CD8-positive, alpha-beta T cell (primary cell): ENCODE measurements at regions of chrX and their contacts with region 1.

Region 1: GRCh38 chrX:65985922-65986588 is 53.8 kb downstream of the VSIG4 start:
- DNase-seq: peak in 8 of 9 experiments; percentile 13 to 84 (median 50)
- ATAC-seq: peak; percentile 97
- H3K4me3 ChIP-seq: no peak overlapping the region
- H3K4me3 Mint-ChIP-seq: no peak overlapping the region
- H3K27ac ChIP-seq: peak overlapping the region in 1 of 2 experiments; percentile 59
- H3K27ac Mint-ChIP-seq: peak overlapping the region; percentile 62
- H3K4me1 ChIP-seq: peaks cover 6% of the 10 kb centered on the region
- H3K4me1 Mint-ChIP-seq: peaks cover 14% of the 10 kb centered on the region
- H3K27me3 ChIP-seq: no peaks in the 10 kb centered on the region
- H3K27me3 Mint-ChIP-seq: no peaks in the 10 kb centered on the region
- CTCF ChIP-seq: peak; percentile 47

Region 2: GRCh38 chrX:65677954-65678469 is 308.0 kb before region 1 on chrX:
- CTCF ChIA-PET with region 1: interaction called, 5 read pairs
- POLR2A ChIA-PET with region 1: no interaction called
- intact Hi-C with region 1: loop called in 1 of 2 experiments (anchors 5 kb)
- DNase-seq: no peak
- ATAC-seq: no peak
- H3K4me3 ChIP-seq: no peak overlapping the region
- H3K4me3 Mint-ChIP-seq: peak overlapping the region; percentile 58
- H3K27ac ChIP-seq: peak overlapping the region in 1 of 2 experiments; percentile 54
- H3K27ac Mint-ChIP-seq: peak overlapping the region; percentile 77
- H3K4me1 ChIP-seq: peaks cover 85% of the 10 kb centered on the region
- H3K4me1 Mint-ChIP-seq: peaks cover 83% of the 10 kb centered on the region
- H3K27me3 ChIP-seq: no peaks in the 10 kb centered on the region
- H3K27me3 Mint-ChIP-seq: no peaks in the 10 kb centered on the region
- CTCF ChIP-seq: no peak

Region 3: GRCh38 chrX:65723706-65724105 is 262.3 kb before region 1 on chrX:
- CTCF ChIA-PET with region 1: no interaction called
- POLR2A ChIA-PET with region 1: no interaction called
- intact Hi-C with region 1: loop called in 1 of 2 experiments (anchors 10 kb)
- DNase-seq: peak in 5 of 9 experiments; percentile 13 to 81 (median 53)
- ATAC-seq: peak; percentile 68
- H3K4me3 ChIP-seq: no peak overlapping the region
- H3K4me3 Mint-ChIP-seq: peak overlapping the region; percentile 45
- H3K27ac ChIP-seq: peak overlapping the region; percentile 58 to 83
- H3K27ac Mint-ChIP-seq: peak overlapping the region; percentile 91
- H3K4me1 ChIP-seq: peaks cover 86% of the 10 kb centered on the region
- H3K4me1 Mint-ChIP-seq: peaks cover 84% of the 10 kb centered on the region
- H3K27me3 ChIP-seq: no peaks in the 10 kb centered on the region
- H3K27me3 Mint-ChIP-seq: no peaks in the 10 kb centered on the region
- CTCF ChIP-seq: no peak

Region 4: DNA sequence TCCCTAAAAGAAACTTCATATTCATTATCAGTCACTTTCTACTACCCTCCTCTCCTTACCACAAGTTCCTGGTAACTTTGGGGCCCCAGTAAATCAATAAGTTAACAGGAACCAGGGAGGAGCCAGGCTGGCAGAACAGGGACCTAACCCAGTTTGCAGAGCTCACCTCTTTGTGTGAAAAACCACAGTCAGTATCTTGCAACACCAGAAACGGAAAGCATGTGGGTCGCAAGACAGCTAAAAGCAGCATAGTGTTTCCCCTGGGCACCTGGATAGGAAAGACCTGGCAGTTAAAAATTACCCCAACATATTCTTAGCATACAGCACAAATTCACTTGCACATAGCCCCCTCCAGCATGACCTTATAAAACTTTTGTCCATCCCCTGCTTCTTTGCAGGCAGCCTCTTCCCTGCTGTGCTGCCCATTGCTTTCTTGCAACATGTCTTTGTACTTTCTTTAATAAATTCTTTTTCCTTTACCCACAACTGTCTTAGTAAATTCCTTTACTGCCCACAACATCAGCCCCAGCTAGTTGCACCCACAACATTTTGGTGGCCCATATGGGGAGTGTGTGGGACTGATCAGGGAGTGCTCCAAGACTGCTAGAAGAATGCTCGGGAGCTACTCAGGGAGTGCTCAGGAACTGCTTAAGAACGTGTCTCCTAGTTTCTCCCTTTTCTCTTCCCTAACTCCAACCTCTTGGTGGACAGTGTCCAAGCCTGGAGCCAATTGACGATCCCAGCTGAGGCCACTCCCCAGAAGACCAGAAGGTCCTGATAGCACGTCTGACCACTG is 235.2 kb before region 1 on chrX:
- CTCF ChIA-PET with region 1: no interaction called
- POLR2A ChIA-PET with region 1: no interaction called
- intact Hi-C with region 1: loop called in 1 of 2 experiments (anchors 10 kb)
- DNase-seq: peak in 7 of 9 experiments; percentile 9 to 72 (median 18)
- ATAC-seq: peak; percentile 79
- H3K4me3 ChIP-seq: peak overlapping the region in 1 of 2 experiments; percentile 37
- H3K4me3 Mint-ChIP-seq: peak overlapping the region; percentile 61
- H3K27ac ChIP-seq: no peak overlapping the region
- H3K27ac Mint-ChIP-seq: peak overlapping the region; percentile 76
- H3K4me1 ChIP-seq: peaks cover 25% of the 10 kb centered on the region
- H3K4me1 Mint-ChIP-seq: peaks cover 58% of the 10 kb centered on the region
- H3K27me3 ChIP-seq: no peaks in the 10 kb centered on the region
- H3K27me3 Mint-ChIP-seq: no peaks in the 10 kb centered on the region
- CTCF ChIP-seq: no peak

Region 5: DNA sequence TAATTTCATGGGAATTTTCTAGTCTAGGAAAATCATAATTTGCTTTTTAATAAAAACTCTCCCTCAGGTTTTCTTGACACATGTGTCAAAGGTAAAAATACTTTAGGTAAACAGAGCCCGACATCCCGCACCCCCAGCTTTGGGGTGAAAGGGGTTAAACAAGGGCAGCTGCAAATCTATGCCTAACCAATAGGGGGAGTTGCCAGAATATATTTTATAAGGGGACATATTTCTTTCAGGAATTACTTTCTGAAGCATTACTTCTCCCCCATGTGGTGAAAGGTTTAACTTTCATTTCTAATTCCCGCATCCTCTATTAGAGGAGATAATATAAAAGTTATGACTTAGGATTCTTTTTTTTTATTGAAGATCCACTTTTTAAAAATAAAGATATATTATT is 124.1 kb after region 1 on chrX:
- CTCF ChIA-PET with region 1: no interaction called
- POLR2A ChIA-PET with region 1: no interaction called
- intact Hi-C with region 1: no loop called
- DNase-seq: peak in 2 of 9 experiments; percentile 32 to 50
- ATAC-seq: peak; percentile 34
- H3K4me3 ChIP-seq: no peak overlapping the region
- H3K4me3 Mint-ChIP-seq: no peak overlapping the region
- H3K27ac ChIP-seq: no peak overlapping the region
- H3K27ac Mint-ChIP-seq: no peak overlapping the region
- H3K4me1 ChIP-seq: no peaks in the 10 kb centered on the region
- H3K4me1 Mint-ChIP-seq: peaks cover 2% of the 10 kb centered on the region
- H3K27me3 ChIP-seq: no peaks in the 10 kb centered on the region
- H3K27me3 Mint-ChIP-seq: no peaks in the 10 kb centered on the region
- CTCF ChIP-seq: peak; percentile 33

Region 6: DNA sequence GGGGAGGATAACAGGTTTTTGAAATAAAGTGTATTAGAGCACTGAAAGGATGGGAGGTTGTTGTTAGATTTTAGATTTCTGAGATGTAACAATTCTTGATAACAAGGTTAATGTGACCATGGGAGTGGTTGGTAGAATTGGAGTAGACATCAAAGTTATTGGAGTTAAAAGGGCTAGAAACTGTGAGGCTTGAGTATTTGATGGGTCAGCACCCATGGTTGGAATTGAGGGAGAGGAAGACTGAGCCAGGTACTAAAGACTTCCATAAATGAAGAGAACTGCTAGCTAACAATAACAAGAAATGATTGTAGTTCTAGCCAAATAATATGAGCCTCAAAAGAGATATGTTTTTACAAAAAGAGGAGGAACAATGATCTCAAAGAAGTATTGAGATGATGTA is 276.8 kb after region 1 on chrX:
- CTCF ChIA-PET with region 1: no interaction called
- POLR2A ChIA-PET with region 1: no interaction called
- intact Hi-C with region 1: no loop called
- DNase-seq: no peak
- ATAC-seq: no peak
- H3K4me3 ChIP-seq: no peak overlapping the region
- H3K4me3 Mint-ChIP-seq: no peak overlapping the region
- H3K27ac ChIP-seq: no peak overlapping the region
- H3K27ac Mint-ChIP-seq: no peak overlapping the region
- H3K4me1 ChIP-seq: no peaks in the 10 kb centered on the region
- H3K4me1 Mint-ChIP-seq: no peaks in the 10 kb centered on the region
- H3K27me3 ChIP-seq: no peaks in the 10 kb centered on the region
- H3K27me3 Mint-ChIP-seq: peaks cover 3% of the 10 kb centered on the region
- CTCF ChIP-seq: no peak